HepG2 (cell line): ENCODE measurements at regions of chr4 and their contacts with region 1.

Region 1: GRCh38 chr4:169254546-169254983 is 16.2 kb downstream of the SH3RF1 start:
- DNase-seq: peak; percentile 67
- ATAC-seq: peak; percentile 45
- H3K4me3 ChIP-seq: no peak overlapping the region
- H3K27ac ChIP-seq: peak overlapping the region; percentile 36
- H3K4me1 ChIP-seq: peaks cover 78% of the 10 kb centered on the region
- H3K27me3 ChIP-seq: no peaks in the 10 kb centered on the region
- CTCF ChIP-seq: no peak
- EP300 ChIP-seq: peak in 1 of 2 experiments; percentile 27; a peak in 1 of 4 replicates
- POLR2A ChIP-seq: no peak
- RAD21 ChIP-seq: no peak

Region 2: GRCh38 chr4:169045862-169046584 is 208.5 kb before region 1 on chr4:
- CTCF ChIA-PET with region 1: no interaction called
- POLR2A ChIA-PET with region 1: no interaction called
- in situ Hi-C with region 1: no loop called
- intact Hi-C with region 1: no loop called
- DNase-seq: no peak
- ATAC-seq: peak; percentile 76
- H3K4me3 ChIP-seq: no peak overlapping the region
- H3K27ac ChIP-seq: no peak overlapping the region
- H3K4me1 ChIP-seq: peaks cover 24% of the 10 kb centered on the region
- H3K27me3 ChIP-seq: peaks cover 0 to 8% of the 10 kb centered on the region in 2 experiments; a peak in 1 of 5 replicates
- CTCF ChIP-seq: peak; percentile 49
- EP300 ChIP-seq: no peak
- POLR2A ChIP-seq: no peak
- RAD21 ChIP-seq: peak; percentile 21; the same call in 1 of the 2 replicates

Region 3: GRCh38 chr4:169069972-169070902 is 184.3 kb before region 1 on chr4:
- CTCF ChIA-PET with region 1: no interaction called
- POLR2A ChIA-PET with region 1: no interaction called
- in situ Hi-C with region 1: no loop called
- intact Hi-C with region 1: loop called (anchors 5 kb)
- DNase-seq: peak; percentile 35
- ATAC-seq: peak; percentile 57
- H3K4me3 ChIP-seq: peak overlapping the region; percentile 45 to 66 (median 51)
- H3K27ac ChIP-seq: peak overlapping the region; percentile 72
- H3K4me1 ChIP-seq: peaks cover 59% of the 10 kb centered on the region
- H3K27me3 ChIP-seq: no peaks in the 10 kb centered on the region
- CTCF ChIP-seq: no peak
- EP300 ChIP-seq: no peak
- POLR2A ChIP-seq: no peak
- RAD21 ChIP-seq: no peak

Region 4: GRCh38 chr4:169293343-169294176 is 39.0 kb after region 1 on chr4:
- CTCF ChIA-PET with region 1: no interaction called
- POLR2A ChIA-PET with region 1: no interaction called
- in situ Hi-C with region 1: no loop called
- intact Hi-C with region 1: no loop called
- DNase-seq: no peak
- ATAC-seq: no peak
- H3K4me3 ChIP-seq: no peak overlapping the region
- H3K27ac ChIP-seq: no peak overlapping the region
- H3K4me1 ChIP-seq: no peaks in the 10 kb centered on the region
- H3K27me3 ChIP-seq: no peaks in the 10 kb centered on the region; a peak in 1 of 5 replicates
- CTCF ChIP-seq: no peak
- EP300 ChIP-seq: no peak
- POLR2A ChIP-seq: no peak
- RAD21 ChIP-seq: no peak

Region 5: DNA sequence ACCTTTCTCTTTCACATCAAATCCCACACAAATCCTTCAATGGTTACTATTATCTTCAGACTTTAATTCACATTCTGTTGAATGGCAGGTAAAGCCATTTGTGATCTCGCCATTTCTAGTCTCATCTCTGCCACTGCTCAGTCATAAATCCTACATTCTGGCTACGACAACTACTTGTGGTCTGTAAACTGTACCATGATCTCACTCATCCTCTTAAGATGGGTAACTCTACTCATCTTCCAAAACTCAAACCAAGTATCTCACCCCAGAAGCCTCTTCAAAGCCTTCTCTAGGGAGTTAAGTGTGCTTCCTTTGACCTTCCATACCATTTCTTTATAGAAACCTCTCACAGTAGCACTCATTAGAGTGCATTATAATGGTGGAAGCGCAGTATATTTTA is 256.1 kb after region 1 on chr4:
- CTCF ChIA-PET with region 1: no interaction called
- POLR2A ChIA-PET with region 1: no interaction called
- in situ Hi-C with region 1: no loop called
- intact Hi-C with region 1: no loop called
- DNase-seq: no peak
- ATAC-seq: no peak
- H3K4me3 ChIP-seq: no peak overlapping the region
- H3K27ac ChIP-seq: no peak overlapping the region
- H3K4me1 ChIP-seq: no peaks in the 10 kb centered on the region
- H3K27me3 ChIP-seq: no peaks in the 10 kb centered on the region
- CTCF ChIP-seq: no peak
- EP300 ChIP-seq: no peak
- POLR2A ChIP-seq: no peak
- RAD21 ChIP-seq: no peak